ENCODE measurements at regions of chr2 and their contacts with region 1.

Region 1: DNA sequence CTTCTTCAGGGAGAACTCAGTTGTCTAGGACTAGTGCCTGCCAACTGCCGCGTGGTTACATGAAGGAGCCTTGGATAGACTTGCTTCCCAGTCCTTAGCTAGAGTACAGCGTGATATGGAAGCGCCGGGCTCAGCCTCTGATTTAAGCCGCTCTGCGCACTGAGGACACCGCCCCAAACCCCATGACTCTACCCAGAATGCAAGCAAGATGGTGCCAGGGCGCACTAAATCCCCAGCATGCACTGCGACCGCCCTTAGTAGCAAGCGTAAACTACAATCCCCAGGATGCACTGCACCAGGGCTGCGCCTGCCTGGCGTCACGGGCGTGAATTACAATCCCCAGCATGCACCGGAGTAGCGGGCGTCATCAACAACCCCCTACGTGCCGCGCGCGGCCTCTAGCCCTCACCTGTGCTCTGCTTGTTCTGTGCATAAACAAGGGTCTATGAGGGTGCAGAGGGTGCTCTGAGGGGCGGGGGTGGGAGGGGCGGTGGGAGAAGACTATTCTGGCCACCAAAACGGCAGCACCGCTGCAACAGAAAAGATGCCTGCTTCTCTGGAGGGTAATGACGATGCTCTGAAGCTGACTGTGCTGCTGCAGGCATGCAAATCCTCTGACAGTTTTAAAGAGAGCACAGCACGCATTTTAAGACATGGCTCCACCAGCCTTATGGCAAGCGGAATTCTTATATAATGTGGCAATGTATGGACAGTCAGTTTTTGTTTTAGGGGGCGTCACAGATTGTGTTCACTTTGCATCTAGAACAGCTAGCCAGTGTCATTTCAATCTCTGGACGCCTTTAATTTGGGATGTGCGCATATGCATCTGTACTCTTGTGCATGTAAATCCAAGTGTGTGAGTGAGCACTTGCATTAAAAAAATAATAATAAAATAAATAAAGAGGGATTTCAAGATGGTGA is 282.5 kb upstream of the MYT1L start:
- DNase-seq: peak; percentile 97
- H3K4me3 Mint-ChIP-seq: peak overlapping the region; percentile 84
- H3K27ac Mint-ChIP-seq: peak overlapping the region; percentile 82
- H3K4me1 Mint-ChIP-seq: peaks cover 4% of the 10 kb centered on the region
- H3K27me3 Mint-ChIP-seq: peaks cover 13% of the 10 kb centered on the region

Region 2: DNA sequence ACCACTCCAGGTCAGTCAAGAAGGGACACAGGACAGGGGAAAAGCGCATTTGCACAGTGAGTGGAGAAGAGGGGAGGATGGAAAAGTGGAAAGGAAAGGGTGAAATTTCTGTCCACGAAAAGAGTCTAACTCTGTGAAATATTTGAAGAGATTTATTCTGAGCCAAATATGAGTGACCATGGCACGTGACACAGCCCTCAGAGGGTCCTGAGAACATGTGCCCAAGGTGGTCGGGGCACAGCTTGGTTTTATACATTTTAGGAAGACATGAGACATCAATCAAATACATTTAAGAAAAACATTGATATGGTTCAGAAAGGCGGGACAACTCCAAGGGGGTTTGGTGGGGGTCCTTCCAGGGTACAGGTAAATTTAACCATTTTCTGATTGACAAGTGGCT is 393.6 kb before region 1 on chr2:
- intact Hi-C with region 1: no loop called
- DNase-seq: no peak
- H3K4me3 Mint-ChIP-seq: no peak overlapping the region
- H3K27ac Mint-ChIP-seq: no peak overlapping the region
- H3K4me1 Mint-ChIP-seq: no peaks in the 10 kb centered on the region
- H3K27me3 Mint-ChIP-seq: no peaks in the 10 kb centered on the region

Region 3: GRCh38 chr2:2646433-2647051 is 33.0 kb after region 1 on chr2:
- intact Hi-C with region 1: loop called (anchors 1 kb)
- DNase-seq: peak; percentile 86
- H3K4me3 Mint-ChIP-seq: peak overlapping the region; percentile 66
- H3K27ac Mint-ChIP-seq: peak overlapping the region; percentile 55
- H3K4me1 Mint-ChIP-seq: peaks cover 19% of the 10 kb centered on the region
- H3K27me3 Mint-ChIP-seq: no peaks in the 10 kb centered on the region

Region 4: DNA sequence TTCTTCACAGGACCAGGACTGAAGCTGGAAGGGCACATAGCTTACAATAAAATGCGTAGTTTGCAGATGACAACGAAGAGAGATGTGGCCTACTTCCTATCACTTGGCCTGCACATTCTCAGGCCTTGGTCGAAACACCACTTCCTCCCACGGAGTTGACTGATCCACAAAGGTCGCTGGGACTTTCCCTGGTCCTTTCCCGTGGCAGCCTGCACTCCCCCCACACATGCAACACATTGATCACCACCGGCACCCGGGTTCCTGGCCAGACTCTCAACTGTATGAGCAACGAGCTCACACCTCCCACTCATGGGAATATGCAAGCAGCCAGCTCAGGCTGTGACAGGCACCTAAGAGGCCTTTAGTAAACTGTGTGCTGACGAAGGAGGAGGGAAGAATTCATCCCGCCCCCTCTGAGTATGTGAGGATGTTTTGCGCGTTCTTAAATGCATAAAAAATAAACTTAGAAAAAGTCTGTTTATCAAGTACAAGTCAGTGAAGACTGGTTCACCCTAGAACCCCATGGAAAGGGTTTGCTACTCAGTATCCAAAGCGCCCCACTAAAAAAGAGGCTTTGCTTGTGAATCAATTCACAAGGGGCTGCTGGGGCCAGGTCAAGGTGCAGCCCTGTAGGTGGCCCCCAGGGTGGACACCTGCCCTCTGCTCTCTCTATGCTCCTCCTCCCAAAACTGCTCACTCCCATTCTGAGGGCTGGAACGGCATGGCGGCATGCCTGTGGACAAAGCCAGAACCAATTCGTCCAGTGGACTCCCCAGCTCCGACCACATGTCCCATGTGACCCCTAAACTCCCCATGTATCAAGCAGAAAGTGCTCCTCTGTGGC is 609.8 kb after region 1 on chr2:
- intact Hi-C with region 1: loop called (anchors 1 kb)
- DNase-seq: peak; percentile 91
- H3K4me3 Mint-ChIP-seq: peak overlapping the region; percentile 52
- H3K27ac Mint-ChIP-seq: peak overlapping the region; percentile 94
- H3K4me1 Mint-ChIP-seq: peaks cover 42% of the 10 kb centered on the region
- H3K27me3 Mint-ChIP-seq: no peaks in the 10 kb centered on the region

Region 5: DNA sequence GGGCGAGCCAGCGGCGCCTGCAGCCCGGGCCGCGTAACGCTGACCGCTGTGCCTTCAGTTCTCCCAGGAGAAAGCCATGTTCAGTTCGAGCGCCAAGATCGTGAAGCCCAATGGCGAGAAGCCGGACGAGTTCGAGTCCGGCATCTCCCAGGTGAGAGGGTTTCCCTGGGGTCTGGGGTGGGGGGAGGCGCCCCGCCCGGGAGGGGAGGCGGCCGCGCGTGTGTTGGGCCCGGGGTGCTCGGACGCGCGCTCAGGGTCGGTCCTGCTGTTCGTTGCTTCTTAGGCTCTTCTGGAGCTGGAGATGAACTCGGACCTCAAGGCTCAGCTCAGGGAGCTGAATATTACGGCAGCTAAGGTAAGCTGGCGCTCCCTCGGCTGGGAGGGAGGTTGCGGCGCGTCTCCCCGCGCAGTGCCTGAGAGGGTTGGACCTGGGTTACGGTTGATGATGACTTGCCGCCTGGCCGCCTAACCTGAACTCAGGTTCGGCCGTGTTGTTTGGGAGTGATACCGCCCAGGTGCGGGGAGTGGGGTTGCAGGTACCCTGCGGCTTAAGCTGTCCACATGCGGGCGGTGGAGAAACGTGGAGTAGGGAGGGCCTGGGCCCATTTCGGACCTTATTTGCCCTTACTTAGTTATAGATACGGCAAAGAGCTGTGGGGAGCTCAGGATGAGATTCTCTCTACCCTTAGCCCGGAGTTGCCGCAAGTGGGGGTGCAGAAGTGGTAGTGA is 962.2 kb after region 1 on chr2:
- intact Hi-C with region 1: loop called (anchors 10 kb)
- DNase-seq: peak; percentile 78
- H3K4me3 Mint-ChIP-seq: peak overlapping the region; percentile 92
- H3K27ac Mint-ChIP-seq: peak overlapping the region; percentile 84
- H3K4me1 Mint-ChIP-seq: peaks cover 45% of the 10 kb centered on the region
- H3K27me3 Mint-ChIP-seq: no peaks in the 10 kb centered on the region

Measured in activated CD4-positive, alpha-beta T cell treated with anti-CD3 and anti-CD28 coated beads, Interleukin-2, amount 10 ng/mL, durations not matched to agents 24 days and 14 days (primary cell).